BJ (cell line): ENCODE measurements at regions of chr2 and their contacts with region 1.

Region 1: DNA sequence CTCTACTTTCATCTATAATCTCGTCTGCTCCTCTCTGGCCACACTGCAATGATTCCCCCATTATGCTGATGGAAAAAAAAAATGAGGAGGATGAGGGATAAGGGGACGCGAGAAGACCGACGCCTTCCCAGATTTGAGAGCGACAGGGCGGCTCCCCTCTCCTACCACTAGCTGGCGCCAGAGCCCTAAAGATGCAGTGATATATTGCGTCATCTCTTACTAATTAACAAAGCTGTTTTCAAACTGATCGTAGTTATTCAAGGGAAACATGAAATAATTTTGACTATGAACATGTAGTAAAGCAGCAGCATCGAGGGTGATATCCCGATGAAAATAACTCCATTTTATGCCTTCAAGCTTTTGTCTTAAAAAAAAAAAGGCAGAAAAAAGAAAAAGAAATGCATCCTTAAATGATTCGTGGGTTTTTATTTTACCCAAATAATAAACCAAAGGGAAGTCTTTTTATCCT is 48.0 kb upstream of the HNRNPA3 start:
- DNase-seq: peak; percentile 35
- H3K4me3 ChIP-seq: peak overlapping the region; percentile 20; the same call in 1 of the 2 replicates
- H3K27me3 ChIP-seq: 0 out of 2 replicates have a peak, but pooled peaks cover 1% of the 10 kb centered on the region
- CTCF ChIP-seq: peak; percentile 100

Region 2: GRCh38 chr2:177148477-177149154 is 16.0 kb before region 1 on chr2:
- CTCF ChIA-PET with region 1: interaction called, 31 read pairs
- POLR2A ChIA-PET with region 1: no interaction called
- DNase-seq: no peak
- H3K4me3 ChIP-seq: peak overlapping the region; percentile 35
- H3K27me3 ChIP-seq: peaks cover 17% of the 10 kb centered on the region
- CTCF ChIP-seq: peak; percentile 95

Region 3: DNA sequence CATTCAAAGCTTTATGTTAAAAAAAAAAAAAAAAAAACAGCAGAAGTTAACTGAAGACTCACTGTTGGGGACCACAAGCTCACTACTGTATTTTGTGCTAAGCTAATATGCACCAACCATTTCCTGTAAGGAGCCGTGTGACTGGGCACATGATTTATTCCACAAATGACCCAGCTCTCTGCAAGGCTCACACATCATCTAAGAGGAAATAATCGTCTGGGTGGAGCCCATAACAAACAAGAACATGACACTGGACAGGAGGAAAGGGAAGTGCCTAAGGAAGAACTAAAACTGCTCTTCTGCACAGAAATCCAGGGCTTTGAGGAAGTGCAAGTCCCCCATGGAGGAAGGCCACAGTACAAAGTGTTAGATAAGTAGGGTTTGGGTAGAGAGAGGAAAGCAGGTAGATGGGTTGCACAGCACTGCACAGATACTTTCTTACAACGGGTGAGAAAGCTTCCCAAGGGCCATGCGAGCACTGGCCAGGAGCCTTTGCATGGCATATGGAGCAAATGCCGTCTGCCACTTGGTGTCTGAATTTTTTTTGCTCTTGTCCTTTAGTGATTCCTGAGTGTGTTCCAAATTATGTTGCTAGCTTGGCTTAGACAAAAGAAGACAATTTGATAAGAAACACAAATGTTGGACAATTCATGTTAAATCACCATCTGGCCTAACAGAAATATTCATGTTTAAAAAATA is 75.5 kb after region 1 on chr2:
- CTCF ChIA-PET with region 1: interaction called, 13 read pairs
- POLR2A ChIA-PET with region 1: interaction called, 11 read pairs
- DNase-seq: no peak
- H3K4me3 ChIP-seq: no peak overlapping the region
- H3K27me3 ChIP-seq: no peaks in the 10 kb centered on the region
- CTCF ChIP-seq: no peak

Region 4: GRCh38 chr2:177296040-177296439 is 131.4 kb after region 1 on chr2:
- CTCF ChIA-PET with region 1: interaction called, 12 read pairs
- POLR2A ChIA-PET with region 1: no interaction called
- DNase-seq: no peak
- H3K4me3 ChIP-seq: no peak overlapping the region
- H3K27me3 ChIP-seq: no peaks in the 10 kb centered on the region
- CTCF ChIP-seq: no peak

Region 5: DNA sequence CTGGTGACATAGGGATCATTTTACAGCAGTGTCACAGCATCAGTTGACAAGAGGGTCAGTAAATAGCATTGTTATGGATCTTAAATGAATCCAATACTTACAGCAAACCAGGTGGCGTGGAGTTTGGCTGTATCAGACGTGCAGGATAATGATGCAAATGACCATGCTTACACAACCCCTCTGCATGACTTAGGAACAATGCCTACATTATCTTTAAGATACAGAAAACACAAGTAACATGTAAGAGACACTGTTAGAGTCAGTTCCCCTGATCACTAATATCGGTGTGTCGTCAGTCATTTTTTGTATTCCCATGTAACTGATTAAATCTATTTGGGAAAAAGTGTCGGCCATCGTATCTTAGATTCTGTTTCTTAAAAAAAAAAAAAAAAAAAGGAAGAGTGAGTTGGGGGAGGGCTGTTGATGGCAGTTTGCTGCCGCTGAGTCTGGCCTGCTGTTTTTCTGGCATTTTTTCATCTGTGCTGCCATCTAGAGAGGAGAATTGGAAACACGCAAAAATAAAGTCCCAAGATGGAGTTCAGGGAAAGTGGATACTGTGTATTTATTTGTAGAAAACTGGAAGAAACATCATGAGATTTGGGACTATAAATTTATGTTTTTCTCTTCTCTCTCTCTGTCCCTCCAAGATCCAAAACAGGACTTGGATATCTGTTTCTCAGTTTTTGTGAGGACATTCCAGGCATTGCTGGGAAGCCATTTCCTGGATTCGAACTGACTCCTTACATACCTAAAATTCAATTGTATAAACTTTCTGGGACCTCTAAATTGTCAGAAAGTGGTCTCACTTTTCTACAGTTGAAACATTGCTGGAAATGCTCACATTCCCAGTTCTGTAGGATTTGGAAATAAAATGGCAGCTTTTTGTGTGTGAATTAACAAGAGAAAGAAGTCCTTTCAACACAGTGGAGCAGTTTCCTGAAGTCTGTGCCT is 167.7 kb after region 1 on chr2:
- CTCF ChIA-PET with region 1: interaction called, 90 read pairs
- POLR2A ChIA-PET with region 1: no interaction called
- DNase-seq: no peak
- H3K4me3 ChIP-seq: no peak overlapping the region
- H3K27me3 ChIP-seq: no peaks in the 10 kb centered on the region; the same call in 1 of the 2 replicates
- CTCF ChIP-seq: peak; percentile 60

Region 6: DNA sequence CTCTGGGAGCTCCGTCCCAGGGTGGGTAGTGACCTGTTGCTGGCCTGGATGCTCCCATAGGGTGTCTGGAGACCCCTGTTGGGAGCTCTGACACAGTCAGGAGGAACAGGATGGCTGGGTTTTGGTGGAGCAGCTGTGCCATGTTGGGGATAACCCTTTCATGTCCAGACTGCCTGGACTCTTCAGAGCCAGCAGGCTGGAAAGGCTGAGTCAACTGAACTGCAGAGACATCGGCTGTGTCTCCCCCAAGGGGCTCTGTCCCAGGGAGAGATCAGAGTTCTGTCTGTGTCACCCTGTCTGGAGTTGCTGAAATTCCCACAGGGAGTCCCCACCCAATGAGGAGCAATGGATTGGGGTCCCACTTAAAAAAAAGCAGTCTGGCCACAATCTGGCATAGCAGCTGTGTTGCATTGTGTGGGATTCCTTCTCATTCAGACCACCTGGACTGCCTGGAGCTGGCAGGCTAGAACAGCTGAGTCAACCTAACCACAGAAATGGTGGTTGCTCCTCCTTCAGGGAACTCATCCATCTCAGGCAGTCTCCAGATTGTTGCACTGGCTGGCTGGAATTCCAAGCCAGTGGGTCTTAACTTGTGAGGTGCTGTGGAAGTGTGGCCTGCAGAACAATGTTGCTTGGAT is 265.2 kb after region 1 on chr2:
- CTCF ChIA-PET with region 1: interaction called, 14 read pairs
- POLR2A ChIA-PET with region 1: no interaction called
- DNase-seq: peak; percentile 63
- H3K4me3 ChIP-seq: no peak overlapping the region
- H3K27me3 ChIP-seq: no peaks in the 10 kb centered on the region
- CTCF ChIP-seq: no peak